Mammary epithelial cell (primary cell): ENCODE measurements at regions of chr11 and their contacts with region 1.

Region 1: GRCh38 chr11:83115551-83115950 is 41.4 kb upstream of the PCF11 start:
- DNase-seq: no peak
- H3K4me3 ChIP-seq: no peak overlapping the region
- H3K27ac ChIP-seq: no peak overlapping the region
- H3K4me1 ChIP-seq: no peaks in the 10 kb centered on the region
- H3K27me3 ChIP-seq: no peaks in the 10 kb centered on the region
- CTCF ChIP-seq: no peak

Region 2: DNA sequence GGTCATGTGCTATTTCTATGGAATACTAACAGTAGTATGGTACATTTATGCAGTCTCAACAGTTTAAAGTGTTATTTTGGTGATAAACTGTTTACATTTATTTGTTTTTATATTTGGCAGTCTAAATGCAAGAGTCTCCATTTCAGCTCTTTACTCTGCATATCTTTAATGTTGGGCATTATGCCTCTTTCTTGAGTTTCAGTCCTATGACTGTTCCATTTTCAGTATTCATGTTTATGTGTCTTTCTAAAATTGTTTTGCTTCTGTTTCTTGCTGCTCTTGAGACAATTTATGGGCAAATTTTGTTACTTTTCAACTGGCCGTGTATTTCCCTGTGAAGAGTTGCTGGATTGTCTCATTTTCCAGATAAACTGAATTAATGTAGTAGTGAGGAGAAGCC is 37.3 kb before region 1 on chr11:
- CTCF ChIA-PET with region 1: interaction called, 18 read pairs
- dilution Hi-C with region 1: no loop called
- in situ Hi-C with region 1: no loop called
- intact Hi-C with region 1: no loop called
- DNase-seq: no peak
- H3K4me3 ChIP-seq: no peak overlapping the region
- H3K27ac ChIP-seq: no peak overlapping the region
- H3K4me1 ChIP-seq: peaks cover under 1% of the 10 kb centered on the region
- H3K27me3 ChIP-seq: no peaks in the 10 kb centered on the region
- CTCF ChIP-seq: no peak